Ovary (tissue), 10 donors: ENCODE measurements at regions of chr22 and their contacts with region 1.

Region 1: GRCh38 chr22:19535001-19535400 is 10.8 kb upstream of the CLDN5 start:
- DNase-seq: no peak
- H3K4me3 ChIP-seq: no peak overlapping the region
- H3K27ac ChIP-seq: no peak overlapping the region
- H3K4me1 ChIP-seq: no peaks in the 10 kb centered on the region
- H3K27me3 ChIP-seq: no peaks in the 10 kb centered on the region
- CTCF ChIP-seq: no peak
- EP300 ChIP-seq: no peak
- POLR2A ChIP-seq: no peak

Region 2: DNA sequence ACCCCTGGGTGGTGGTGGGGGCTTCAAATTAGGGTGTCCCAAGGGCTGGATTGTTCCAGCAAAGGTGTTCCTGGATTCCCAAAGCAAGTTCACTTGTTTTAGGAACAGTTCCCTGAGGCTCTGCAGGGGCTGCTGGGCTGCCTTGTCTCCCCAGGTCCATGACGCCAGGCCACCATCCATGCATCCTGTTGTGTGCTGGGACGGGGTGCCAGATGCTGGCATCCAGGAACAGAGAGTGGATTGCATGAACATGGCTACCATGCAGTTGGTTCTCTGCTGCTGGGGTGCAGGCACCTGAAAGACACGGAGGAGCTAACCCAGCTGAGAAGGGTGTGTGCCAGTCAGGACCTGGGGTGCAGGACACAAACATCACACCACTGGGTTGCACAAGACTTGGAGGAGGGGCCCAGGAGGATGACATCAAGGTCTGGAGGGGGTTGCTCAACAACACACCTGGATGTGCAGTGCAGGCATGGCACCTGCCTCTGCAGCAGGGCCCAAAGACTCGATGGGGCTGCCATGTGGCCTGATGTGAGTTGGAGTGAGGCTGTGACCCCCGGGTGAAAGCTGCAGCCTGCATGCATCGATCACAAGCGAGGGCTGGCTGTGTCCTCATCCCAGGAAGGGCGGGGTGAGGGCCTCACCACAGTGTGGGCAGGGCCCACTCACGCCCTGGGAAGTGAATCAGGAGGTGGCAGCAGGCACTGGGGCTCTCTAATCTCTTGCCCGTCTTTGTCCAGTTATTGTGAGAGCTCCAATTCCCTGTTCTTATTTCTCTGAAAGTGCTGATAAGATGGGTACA is 63.3 kb after region 1 on chr22:
- intact Hi-C with region 1: loop called in 1 of 4 experiments (anchors 10 kb)
- DNase-seq: no peak
- H3K4me3 ChIP-seq: no peak overlapping the region
- H3K27ac ChIP-seq: no peak overlapping the region
- H3K4me1 ChIP-seq: no peaks in the 10 kb centered on the region
- H3K27me3 ChIP-seq: no peaks in the 10 kb centered on the region
- CTCF ChIP-seq: no peak
- EP300 ChIP-seq: no peak
- POLR2A ChIP-seq: no peak